Naive thymus-derived CD4-positive, alpha-beta T cell (primary cell): ENCODE measurements at regions of chr7 and their contacts with region 1.

Region 1: GRCh38 chr7:121547544-121548092 is 151.5 kb upstream of the FAM3C start:
- DNase-seq: peak in 7 of 9 donors; percentile 19 to 58 (median 48)
- ATAC-seq: peak; percentile 90
- H3K4me3 ChIP-seq: no peak overlapping the region
- H3K4me3 Mint-ChIP-seq: no peak overlapping the region
- H3K27ac ChIP-seq: no peak overlapping the region
- H3K27ac Mint-ChIP-seq: no peak overlapping the region
- H3K4me1 ChIP-seq: no peaks in the 10 kb centered on the region
- H3K4me1 Mint-ChIP-seq: peaks cover 0 to 38% (median 0%) of the 10 kb centered on the region in 7 donors
- H3K27me3 ChIP-seq: no peaks in the 10 kb centered on the region
- H3K27me3 Mint-ChIP-seq: peaks cover 0 to 2% (median 0%) of the 10 kb centered on the region in 5 donors

Region 2: GRCh38 chr7:121107923-121108498 is 439.6 kb before region 1 on chr7:
- CTCF ChIA-PET with region 1: interaction called, 4 read pairs
- POLR2A ChIA-PET with region 1: no interaction called
- intact Hi-C with region 1: loop called in 1 of 2 experiments (anchors 10 kb)
- DNase-seq: peak in 7 of 9 donors; percentile 26 to 59 (median 54)
- ATAC-seq: peak; percentile 83
- H3K4me3 ChIP-seq: no peak overlapping the region
- H3K4me3 Mint-ChIP-seq: no peak overlapping the region
- H3K27ac ChIP-seq: no peak overlapping the region
- H3K27ac Mint-ChIP-seq: no peak overlapping the region
- H3K4me1 ChIP-seq: no peaks in the 10 kb centered on the region
- H3K4me1 Mint-ChIP-seq: no peaks in the 10 kb centered on the region
- H3K27me3 ChIP-seq: no peaks in the 10 kb centered on the region
- H3K27me3 Mint-ChIP-seq: peaks cover 0 to 27% (median 5%) of the 10 kb centered on the region in 5 donors

Region 3: GRCh38 chr7:121366852-121367431 is 180.7 kb before region 1 on chr7:
- CTCF ChIA-PET with region 1: interaction called, 76 read pairs
- POLR2A ChIA-PET with region 1: no interaction called
- intact Hi-C with region 1: loop called (anchors 1 kb)
- DNase-seq: peak in 6 of 9 donors; percentile 26 to 61 (median 57)
- ATAC-seq: peak; percentile 67
- H3K4me3 ChIP-seq: no peak overlapping the region
- H3K4me3 Mint-ChIP-seq: no peak overlapping the region
- H3K27ac ChIP-seq: no peak overlapping the region
- H3K27ac Mint-ChIP-seq: peak overlapping the region in 3 of 9 donors; percentile 45 to 69 (median 47)
- H3K4me1 ChIP-seq: no peaks in the 10 kb centered on the region
- H3K4me1 Mint-ChIP-seq: peaks cover 0 to 39% (median 4%) of the 10 kb centered on the region in 7 donors
- H3K27me3 ChIP-seq: no peaks in the 10 kb centered on the region
- H3K27me3 Mint-ChIP-seq: no peaks in the 10 kb centered on the region

Region 4: DNA sequence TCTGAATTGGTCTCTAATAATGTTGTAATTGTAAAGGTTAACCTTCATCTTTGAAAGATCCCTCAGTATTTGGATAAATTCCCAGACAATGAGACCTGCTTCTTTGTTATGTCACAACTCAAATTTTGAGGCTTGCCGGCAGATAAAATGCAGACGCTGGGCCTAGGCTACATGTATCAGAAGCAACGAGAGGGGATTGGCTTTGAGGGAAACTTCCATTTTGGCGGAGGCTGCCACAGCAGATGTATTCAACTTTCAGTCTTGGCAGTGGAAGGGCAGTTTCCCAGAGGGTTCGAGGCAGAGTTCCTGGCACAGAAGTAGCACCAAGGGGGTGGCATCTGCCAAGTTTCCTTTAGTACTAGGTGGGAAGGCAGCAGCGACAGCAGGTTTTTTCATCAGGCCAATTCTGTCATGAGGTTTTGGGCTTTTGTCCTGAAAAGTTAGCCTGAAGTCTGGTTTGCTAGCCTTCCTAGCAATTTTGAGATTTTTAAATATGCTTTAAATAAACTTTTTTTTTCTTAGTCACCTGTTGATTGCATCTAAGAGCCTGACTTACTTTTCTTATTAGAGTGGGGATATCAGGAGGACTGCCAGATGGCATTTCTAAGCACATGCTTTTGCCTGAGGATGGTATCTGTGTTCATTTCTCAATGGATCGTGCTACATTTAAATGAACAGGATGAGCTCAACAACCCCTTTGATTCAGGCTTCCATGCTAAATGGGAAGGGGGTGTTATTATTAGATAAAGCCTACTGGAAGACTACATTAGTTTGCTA is 62.0 kb before region 1 on chr7:
- CTCF ChIA-PET with region 1: no interaction called
- POLR2A ChIA-PET with region 1: no interaction called
- intact Hi-C with region 1: loop called in 1 of 2 experiments (anchors 5 kb)
- DNase-seq: no peak
- ATAC-seq: no peak
- H3K4me3 ChIP-seq: no peak overlapping the region
- H3K4me3 Mint-ChIP-seq: no peak overlapping the region
- H3K27ac ChIP-seq: no peak overlapping the region
- H3K27ac Mint-ChIP-seq: no peak overlapping the region
- H3K4me1 ChIP-seq: no peaks in the 10 kb centered on the region
- H3K4me1 Mint-ChIP-seq: peaks cover 4 to 11% (median 7%) of the 10 kb centered on the region in 7 donors
- H3K27me3 ChIP-seq: no peaks in the 10 kb centered on the region
- H3K27me3 Mint-ChIP-seq: peaks cover 0 to 4% (median 0%) of the 10 kb centered on the region in 5 donors

Region 5: GRCh38 chr7:121530227-121531174 is 17.1 kb before region 1 on chr7:
- CTCF ChIA-PET with region 1: interaction called, 5 read pairs
- POLR2A ChIA-PET with region 1: no interaction called
- intact Hi-C with region 1: loop called in 1 of 2 experiments (anchors 1 kb)
- DNase-seq: peak in 1 of 9 donors; percentile 60
- ATAC-seq: peak; percentile 94
- H3K4me3 ChIP-seq: no peak overlapping the region
- H3K4me3 Mint-ChIP-seq: peak overlapping the region in 1 of 10 donors; percentile 54
- H3K27ac ChIP-seq: no peak overlapping the region
- H3K27ac Mint-ChIP-seq: peak overlapping the region in 3 of 9 donors; percentile 3 to 91 (median 51)
- H3K4me1 ChIP-seq: peaks cover 0 to 6% of the 10 kb centered on the region in 2 donors
- H3K4me1 Mint-ChIP-seq: peaks cover 0 to 45% (median 0%) of the 10 kb centered on the region in 7 donors
- H3K27me3 ChIP-seq: no peaks in the 10 kb centered on the region
- H3K27me3 Mint-ChIP-seq: peaks cover 0 to 4% (median 0%) of the 10 kb centered on the region in 5 donors